ENCODE measurements at regions of chr21 and their contacts with region 1.

Region 1: DNA sequence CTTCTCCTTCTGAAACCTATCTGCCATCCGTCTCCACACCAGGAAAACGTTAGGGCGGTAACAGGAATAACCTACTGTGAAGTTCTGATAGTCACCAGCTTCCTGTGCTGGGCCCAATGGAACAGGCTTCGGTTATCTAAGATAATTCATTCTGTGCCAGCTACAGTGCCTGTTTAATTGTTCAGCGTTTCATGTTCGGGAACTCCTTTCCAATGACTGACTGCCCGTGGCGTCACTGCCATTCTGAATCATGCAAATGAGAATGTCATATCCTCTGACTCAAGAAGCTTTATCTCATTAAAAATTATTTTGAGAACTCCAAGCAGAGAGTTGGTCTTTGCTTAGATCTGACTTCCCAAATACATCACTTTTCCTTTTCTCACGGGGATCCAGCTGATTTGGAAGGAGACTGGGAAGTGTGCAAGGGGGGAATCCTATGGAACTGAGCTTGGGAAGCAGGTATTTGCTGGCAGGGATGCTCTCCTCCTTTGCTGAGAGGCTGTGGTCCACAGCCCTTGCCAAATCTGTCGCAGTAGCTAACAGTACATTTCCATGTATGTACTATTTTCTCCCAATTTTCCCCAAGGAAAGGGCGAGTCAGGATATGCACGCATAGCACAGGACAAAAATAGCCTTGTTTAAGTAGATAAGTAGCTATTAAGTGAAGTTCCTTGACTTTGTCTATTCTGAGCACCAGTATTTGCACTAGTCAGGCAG is 358.7 kb downstream of the LTN1 start:
- DNase-seq: peak; percentile 32 to 68
- ATAC-seq: peak; percentile 73 to 95 (median 88)
- H3K4me3 ChIP-seq: peak overlapping the region in 1 of 10 donors; percentile 3
- H3K27ac ChIP-seq: peak overlapping the region; percentile 47 to 89 (median 80)
- H3K4me1 ChIP-seq: peaks cover 4 to 56% (median 30%) of the 10 kb centered on the region in 9 donors
- H3K27me3 ChIP-seq: no peaks in the 10 kb centered on the region
- CTCF ChIP-seq: no peak

Region 2: GRCh38 chr21:28522014-28522799 is 111.8 kb before region 1 on chr21:
- intact Hi-C with region 1: loop called in 4 of 10 experiments (anchors 2 to 5 kb)
- DNase-seq: no peak
- ATAC-seq: peak; percentile 48 to 89 (median 77)
- H3K4me3 ChIP-seq: no peak overlapping the region
- H3K27ac ChIP-seq: peak overlapping the region; percentile 4 to 81 (median 52)
- H3K4me1 ChIP-seq: peaks cover 0 to 34% (median 17%) of the 10 kb centered on the region in 9 donors
- H3K27me3 ChIP-seq: no peaks in the 10 kb centered on the region
- CTCF ChIP-seq: peak in 6 of 9 donors; percentile 27 to 51 (median 43)

Region 3: GRCh38 chr21:28674763-28675162 is 40.8 kb after region 1 on chr21:
- intact Hi-C with region 1: loop called in 1 of 10 experiments (anchors 1 kb)
- DNase-seq: no peak
- ATAC-seq: peak in 2 of 8 donors; percentile 12 to 37
- H3K4me3 ChIP-seq: no peak overlapping the region
- H3K27ac ChIP-seq: peak overlapping the region in 2 of 10 donors; percentile 3 to 37
- H3K4me1 ChIP-seq: peaks cover 0 to 19% (median 10%) of the 10 kb centered on the region in 9 donors
- H3K27me3 ChIP-seq: no peaks in the 10 kb centered on the region
- CTCF ChIP-seq: no peak

Region 4: DNA sequence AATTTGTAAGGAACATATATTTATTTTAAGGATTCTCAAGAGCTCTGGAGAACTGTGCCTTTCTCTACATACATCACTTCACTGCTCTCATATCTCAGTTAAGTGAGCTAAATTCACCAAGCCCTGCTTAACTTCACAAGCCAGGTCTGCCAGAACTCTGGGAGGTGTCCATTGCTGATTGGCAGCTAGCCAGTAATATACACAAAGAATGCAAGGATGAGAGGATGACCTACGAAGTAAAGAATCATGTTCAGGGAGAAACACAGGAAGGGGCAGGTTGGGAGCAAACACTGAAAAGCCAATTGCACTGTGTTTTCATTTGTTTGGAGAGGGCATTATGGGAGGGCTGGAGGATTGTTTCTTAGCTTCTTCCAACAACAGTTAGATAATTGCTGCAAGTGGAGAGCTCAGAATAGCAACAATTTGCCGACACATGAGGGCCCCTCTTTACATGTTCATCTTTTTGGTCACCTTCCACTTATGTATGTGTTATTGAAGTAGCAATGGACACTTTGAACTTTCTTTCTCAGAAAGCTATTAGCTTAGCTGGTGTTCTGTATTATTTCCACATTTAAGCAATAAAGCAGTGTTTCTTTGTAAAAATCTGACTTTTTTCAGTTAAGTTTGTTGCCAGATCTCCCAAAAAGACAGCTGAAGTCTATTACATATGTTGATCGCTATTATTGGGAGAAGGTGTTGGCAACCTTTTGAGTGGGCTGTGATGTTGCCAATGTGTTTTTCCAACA is 103.8 kb after region 1 on chr21:
- intact Hi-C with region 1: loop called in 5 of 10 experiments (anchors 5 to 10 kb)
- DNase-seq: no peak
- ATAC-seq: peak; percentile 36 to 88 (median 72)
- H3K4me3 ChIP-seq: no peak overlapping the region
- H3K27ac ChIP-seq: peak overlapping the region in 8 of 10 donors; percentile 6 to 76 (median 58)
- H3K4me1 ChIP-seq: peaks cover 0 to 27% (median 19%) of the 10 kb centered on the region in 9 donors
- H3K27me3 ChIP-seq: no peaks in the 10 kb centered on the region
- CTCF ChIP-seq: no peak

Measured in heart right ventricle (tissue), 16 donors.